ENCODE measurements at regions of chr11 and their contacts with region 1.

Region 1: GRCh38 chr11:727859-728748 is 19.2 kb upstream of the TALDO1 start:
- DNase-seq: peak; percentile 95
- H3K27ac ChIP-seq: peak overlapping the region; percentile 94
- CTCF ChIP-seq: peak; percentile 94

Region 2: GRCh38 chr11:695538-696248 is 32.4 kb before region 1 on chr11 and contains the start of gene TMEM80:
- CTCF ChIA-PET with region 1: interaction called, 18 read pairs
- POLR2A ChIA-PET with region 1: interaction called, 4 read pairs
- DNase-seq: peak; percentile 89
- H3K27ac ChIP-seq: peak within 1 kb of the TSS; percentile 97
- CTCF ChIP-seq: no peak

Region 3: DNA sequence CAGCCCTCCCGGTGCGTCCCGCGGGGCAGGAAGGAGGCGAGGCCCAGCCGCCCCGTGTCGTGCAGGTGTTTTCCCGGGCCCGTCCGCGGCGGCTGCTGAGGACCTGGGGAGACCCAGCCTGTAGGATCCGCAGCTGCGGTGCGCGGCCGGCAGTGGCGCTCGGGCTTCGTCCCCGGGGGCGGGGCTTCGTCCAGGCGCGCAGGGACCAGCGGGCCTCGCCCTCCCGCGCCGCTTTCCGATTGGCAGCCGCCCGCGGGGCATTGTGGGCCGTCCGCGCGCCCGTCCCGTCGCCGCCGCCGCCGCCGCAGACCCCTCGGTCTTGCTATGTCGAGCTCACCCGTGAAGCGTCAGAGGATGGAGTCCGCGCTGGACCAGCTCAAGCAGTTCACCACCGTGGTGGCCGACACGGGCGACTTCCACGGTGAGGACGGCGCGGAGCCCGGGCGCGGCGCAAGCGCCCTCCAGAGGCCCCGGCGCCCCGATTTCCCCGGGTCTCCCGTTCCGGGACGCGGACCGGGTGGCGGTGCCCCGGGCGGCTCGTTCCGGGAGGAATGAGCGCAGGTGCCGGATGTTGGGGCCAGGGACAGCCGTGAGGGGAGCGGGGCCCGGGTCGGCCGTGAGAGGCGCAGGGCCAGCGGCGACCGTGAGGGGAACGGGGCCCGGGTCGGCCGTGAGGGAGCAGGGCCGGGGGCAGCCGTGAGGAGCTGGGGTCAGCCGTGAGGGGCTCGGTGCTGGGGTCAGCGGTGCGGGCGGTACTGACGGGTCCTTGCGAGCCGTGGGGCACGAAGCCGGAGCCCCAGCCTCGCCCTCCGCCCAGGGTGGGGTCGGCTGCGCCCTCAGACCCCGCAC is 19.3 kb after region 1 on chr11 and contains the start of gene TALDO1:
- CTCF ChIA-PET with region 1: interaction called, 8 read pairs
- POLR2A ChIA-PET with region 1: interaction called, 10 read pairs
- DNase-seq: peak; percentile 88
- H3K27ac ChIP-seq: peak within 1 kb of the TSS; percentile 84
- CTCF ChIP-seq: peak; percentile 31

Region 4: DNA sequence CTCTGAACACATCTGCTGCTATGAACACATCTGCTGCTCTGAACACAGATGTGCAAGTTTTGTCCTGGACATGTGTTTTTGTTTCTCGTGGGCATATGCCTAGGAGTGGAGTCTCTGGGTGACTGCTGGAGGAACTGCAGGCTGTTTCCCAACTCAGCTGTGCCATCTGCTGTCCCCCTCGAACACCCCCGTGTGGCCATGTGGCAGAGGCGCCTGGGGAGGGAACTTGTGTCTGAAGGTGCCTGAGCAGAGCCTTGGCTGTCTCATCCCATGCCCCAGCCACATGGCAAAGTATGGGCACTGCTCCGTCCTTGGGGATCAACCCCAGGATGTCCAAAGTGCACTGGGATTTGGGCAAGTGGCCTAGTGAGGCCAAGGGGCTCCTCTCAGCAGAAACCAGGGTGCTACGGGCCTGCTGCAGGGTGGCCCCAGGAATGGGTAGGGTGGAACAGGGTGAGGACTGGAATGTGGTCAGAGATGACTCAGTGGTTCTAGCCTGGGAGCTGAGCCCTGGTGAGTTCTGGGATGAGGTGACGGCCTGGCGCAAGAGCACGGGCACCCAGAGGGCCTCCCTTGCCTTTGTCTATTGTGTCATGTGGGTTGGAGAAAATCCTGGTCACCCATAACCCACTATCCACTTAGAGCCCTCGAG is 34.4 kb after region 1 on chr11:
- CTCF ChIA-PET with region 1: interaction called, 10 read pairs
- POLR2A ChIA-PET with region 1: interaction called, 14 read pairs
- DNase-seq: peak; percentile 94
- H3K27ac ChIP-seq: peak overlapping the region; percentile 95
- CTCF ChIP-seq: peak; percentile 37

Measured in RWPE1 (cell line).